ENCODE measurements at regions of chr1 and their contacts with region 1.

Region 1: GRCh38 chr1:78839704-78840277 is 166.7 kb downstream of the ADGRL4 start:
- DNase-seq: no peak
- H3K4me3 Mint-ChIP-seq: no peak overlapping the region
- H3K27ac Mint-ChIP-seq: no peak overlapping the region
- H3K4me1 Mint-ChIP-seq: peaks cover 12% of the 10 kb centered on the region
- H3K27me3 Mint-ChIP-seq: peaks cover 6% of the 10 kb centered on the region

Region 2: GRCh38 chr1:78132174-78132947 is 707.4 kb before region 1 on chr1:
- intact Hi-C with region 1: loop called (anchors 5 kb)
- DNase-seq: no peak
- H3K4me3 Mint-ChIP-seq: no peak overlapping the region
- H3K27ac Mint-ChIP-seq: no peak overlapping the region
- H3K4me1 Mint-ChIP-seq: no peaks in the 10 kb centered on the region
- H3K27me3 Mint-ChIP-seq: peaks cover 10% of the 10 kb centered on the region

Region 3: DNA sequence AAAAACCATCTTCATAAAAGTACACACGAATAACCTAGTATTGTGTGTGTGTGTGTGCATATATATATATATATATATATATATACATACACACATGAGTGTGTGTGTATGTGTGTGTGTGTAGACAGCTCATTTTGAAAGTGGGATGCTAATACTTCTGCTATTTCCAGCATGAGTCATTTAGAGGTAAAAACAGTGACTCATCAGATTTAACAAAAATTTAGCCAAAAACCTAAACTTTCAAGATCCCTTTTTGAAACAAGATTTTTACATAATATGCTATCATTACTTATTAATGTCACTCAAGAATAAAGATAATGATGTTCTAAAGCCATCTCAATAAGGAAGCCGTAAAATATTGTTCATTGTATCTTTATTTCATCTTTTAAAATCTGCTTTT is 202.3 kb after region 1 on chr1:
- intact Hi-C with region 1: loop called (anchors 10 kb)
- DNase-seq: no peak
- H3K4me3 Mint-ChIP-seq: no peak overlapping the region
- H3K27ac Mint-ChIP-seq: no peak overlapping the region
- H3K4me1 Mint-ChIP-seq: peaks cover 16% of the 10 kb centered on the region
- H3K27me3 Mint-ChIP-seq: no peaks in the 10 kb centered on the region

Region 4: GRCh38 chr1:79059341-79059740 is 219.6 kb after region 1 on chr1:
- intact Hi-C with region 1: no loop called
- DNase-seq: no peak
- H3K4me3 Mint-ChIP-seq: no peak overlapping the region
- H3K27ac Mint-ChIP-seq: no peak overlapping the region
- H3K4me1 Mint-ChIP-seq: no peaks in the 10 kb centered on the region
- H3K27me3 Mint-ChIP-seq: no peaks in the 10 kb centered on the region

Region 5: DNA sequence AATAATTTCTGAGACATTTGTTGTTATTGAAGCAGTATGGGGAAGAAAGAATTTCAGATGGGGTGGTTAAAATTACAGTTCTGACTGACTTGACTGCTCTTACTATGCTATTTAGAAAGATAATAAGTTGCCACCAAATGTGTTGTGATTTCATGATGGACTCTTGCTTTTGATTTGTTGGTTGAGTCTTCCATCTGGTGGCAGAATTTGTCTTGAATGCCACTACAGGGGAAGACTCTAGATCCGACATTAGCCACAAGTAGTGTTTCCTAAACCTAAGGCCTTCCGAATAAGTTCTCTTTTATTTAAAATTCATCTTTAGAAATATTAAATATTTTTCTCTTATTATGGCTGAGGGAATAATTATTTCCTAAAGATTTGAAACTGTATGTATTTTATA is 357.6 kb after region 1 on chr1:
- intact Hi-C with region 1: loop called (anchors 1 kb)
- DNase-seq: no peak
- H3K4me3 Mint-ChIP-seq: no peak overlapping the region
- H3K27ac Mint-ChIP-seq: no peak overlapping the region
- H3K4me1 Mint-ChIP-seq: peaks cover 4% of the 10 kb centered on the region
- H3K27me3 Mint-ChIP-seq: peaks cover 3% of the 10 kb centered on the region

Measured in activated T-helper 1 cell treated with anti-CD3 and anti-CD28 coated beads, Interleukin-12 subunit alpha, Interleukin-12 subunit beta, Interleukin-2, Interleukin-4 antibody, amounts not matched to agents 30 ng/mL and 10 ng/mL and 1 ng/mL, durations not matched to agents 14 hours and 24 hours and 36 hours (primary cell).